ENCODE measurements at regions of chr14 and their contacts with region 1.

Region 1: DNA sequence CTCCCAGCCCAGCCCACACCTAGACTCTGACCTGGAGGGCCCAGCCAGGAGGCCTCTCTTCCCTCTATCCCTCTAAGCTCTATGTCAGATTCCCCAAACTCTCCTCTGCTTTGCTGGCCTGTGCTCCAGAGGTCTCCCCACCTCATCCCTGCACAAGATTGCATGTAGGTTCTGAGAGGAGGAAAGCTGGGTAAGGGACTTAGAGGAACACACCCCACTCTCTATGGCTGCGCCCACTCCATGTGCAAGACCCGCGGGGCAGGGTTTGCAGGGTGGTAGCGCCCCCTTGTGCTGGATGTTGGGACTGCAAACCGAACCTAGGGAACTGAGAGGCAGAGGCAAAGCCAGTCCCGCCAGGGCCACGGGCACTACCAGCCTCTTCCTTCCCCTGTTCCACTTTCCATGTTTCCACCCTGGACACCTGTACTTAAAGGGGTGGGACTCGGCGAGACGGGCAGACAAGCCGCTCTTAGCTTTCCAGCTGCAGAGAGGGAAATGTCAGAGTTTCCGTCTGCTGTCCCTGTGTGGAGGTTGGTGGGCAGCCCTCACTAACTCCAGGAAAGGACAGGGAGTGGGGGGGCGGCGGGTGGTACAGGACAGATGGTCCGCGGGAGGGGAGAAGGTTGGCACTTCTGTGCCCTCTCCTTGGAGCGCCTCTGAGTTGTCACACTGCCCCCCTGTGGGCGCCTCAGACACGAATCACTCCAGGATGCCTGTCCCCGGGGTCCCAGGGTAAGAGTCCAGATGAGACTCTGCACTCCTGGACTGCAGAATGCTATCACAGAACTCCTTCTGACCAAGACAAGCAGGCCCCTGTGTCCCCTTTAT is 16.8 kb downstream of the MMP14 start:
- DNase-seq: peak; percentile 94

Region 2: GRCh38 chr14:22338917-22339715 is 514.0 kb before region 1 on chr14:
- intact Hi-C with region 1: loop called (anchors 2 kb)
- DNase-seq: peak; percentile 81

Region 3: DNA sequence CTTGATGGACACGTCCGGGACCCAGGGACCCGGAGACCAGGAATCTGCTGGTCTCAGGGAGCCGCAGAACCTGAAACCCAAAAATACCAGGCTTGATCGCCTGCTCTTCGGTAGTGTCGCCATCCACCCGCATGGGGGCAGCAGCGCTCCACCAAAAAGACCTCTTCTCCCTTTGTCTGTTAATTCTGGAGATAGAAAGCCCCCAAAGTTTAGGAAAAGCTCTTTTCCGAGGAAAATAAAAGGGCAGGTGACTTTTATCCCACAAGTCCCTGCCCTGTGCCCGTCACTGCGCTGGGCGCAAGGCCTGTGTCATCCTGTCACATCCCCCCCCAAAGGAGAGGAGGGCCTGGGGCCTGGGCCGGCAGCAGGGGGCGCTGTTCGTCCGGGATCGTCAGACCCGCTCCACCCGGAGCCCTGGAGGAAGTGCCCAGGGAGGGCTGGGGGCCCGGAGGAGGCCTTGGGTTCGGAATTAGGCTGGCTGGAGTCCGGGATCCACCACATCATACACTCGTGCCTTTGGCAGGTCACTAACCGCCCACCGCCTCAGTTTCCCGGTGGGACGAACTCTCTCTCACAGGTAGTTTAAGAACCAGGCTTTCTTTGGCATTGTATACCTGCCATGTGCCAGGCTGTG is 296.0 kb before region 1 on chr14:
- intact Hi-C with region 1: loop called (anchors 5 kb)
- DNase-seq: peak; percentile 93

Region 4: DNA sequence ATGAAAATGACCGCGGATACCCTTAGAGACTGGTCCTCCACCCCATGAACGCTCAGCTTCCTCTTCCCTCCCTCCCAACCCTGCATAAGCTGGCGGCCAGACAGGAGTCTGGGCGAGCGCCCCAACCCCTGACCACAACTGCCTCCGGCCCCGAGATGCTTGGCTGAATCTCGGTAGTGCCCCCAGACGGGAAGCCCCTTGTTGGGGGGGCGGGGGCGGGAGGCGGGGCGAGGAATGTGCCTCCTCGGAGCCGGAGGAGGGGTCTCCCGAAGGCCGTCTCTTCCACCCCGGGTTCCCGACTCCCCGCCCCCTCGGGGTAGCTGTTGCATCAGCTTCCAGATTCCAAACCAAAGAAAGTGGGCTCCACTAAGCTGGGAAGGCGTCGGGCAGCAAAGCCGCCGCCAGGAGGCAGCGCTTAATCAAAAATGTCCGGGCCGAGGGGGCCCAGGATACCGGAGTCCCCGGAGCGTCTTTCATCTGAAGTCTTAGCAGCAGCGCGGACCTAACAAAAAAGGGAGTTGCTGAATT is 30.5 kb before region 1 on chr14:
- intact Hi-C with region 1: loop called (anchors 1 kb)
- DNase-seq: no peak

Region 5: GRCh38 chr14:22836301-22837113 is 16.6 kb before region 1 on chr14 and contains the start of gene MMP14:
- intact Hi-C with region 1: loop called (anchors 2 kb)
- DNase-seq: no peak
- total RNA-seq, gene MMP14: 26.1 TPM

Measured in cardiac septum (tissue), 1 donor.